HCT116 (cell line): ENCODE measurements at regions of chr19 and their contacts with region 1.

Region 1: GRCh38 chr19:13748169-13748828 is 16.0 kb upstream of the MRI1 start:
- DNase-seq: no peak
- ATAC-seq: no peak
- H3K4me3 ChIP-seq: peak overlapping the region; percentile 75 to 78
- H3K27ac ChIP-seq: peak overlapping the region; percentile 83
- H3K4me1 ChIP-seq: peaks cover 2 to 16% of the 10 kb centered on the region in 2 experiments; a peak in 3 of 4 replicates
- H3K27me3 ChIP-seq: no peaks in the 10 kb centered on the region
- CTCF ChIP-seq: no peak
- POLR2A ChIP-seq: no peak
- RAD21 ChIP-seq: no peak

Region 2: GRCh38 chr19:13707915-13708314 is 40.4 kb before region 1 on chr19:
- CTCF ChIA-PET with region 1: no interaction called
- POLR2A ChIA-PET with region 1: no interaction called
- RAD21 ChIA-PET with region 1: no interaction called
- intact Hi-C with region 1: no loop called
- DNase-seq: no peak
- ATAC-seq: no peak
- H3K4me3 ChIP-seq: no peak overlapping the region
- H3K27ac ChIP-seq: no peak overlapping the region
- H3K4me1 ChIP-seq: no peaks in the 10 kb centered on the region
- H3K27me3 ChIP-seq: no peaks in the 10 kb centered on the region
- CTCF ChIP-seq: no peak
- POLR2A ChIP-seq: no peak
- RAD21 ChIP-seq: no peak

Region 3: DNA sequence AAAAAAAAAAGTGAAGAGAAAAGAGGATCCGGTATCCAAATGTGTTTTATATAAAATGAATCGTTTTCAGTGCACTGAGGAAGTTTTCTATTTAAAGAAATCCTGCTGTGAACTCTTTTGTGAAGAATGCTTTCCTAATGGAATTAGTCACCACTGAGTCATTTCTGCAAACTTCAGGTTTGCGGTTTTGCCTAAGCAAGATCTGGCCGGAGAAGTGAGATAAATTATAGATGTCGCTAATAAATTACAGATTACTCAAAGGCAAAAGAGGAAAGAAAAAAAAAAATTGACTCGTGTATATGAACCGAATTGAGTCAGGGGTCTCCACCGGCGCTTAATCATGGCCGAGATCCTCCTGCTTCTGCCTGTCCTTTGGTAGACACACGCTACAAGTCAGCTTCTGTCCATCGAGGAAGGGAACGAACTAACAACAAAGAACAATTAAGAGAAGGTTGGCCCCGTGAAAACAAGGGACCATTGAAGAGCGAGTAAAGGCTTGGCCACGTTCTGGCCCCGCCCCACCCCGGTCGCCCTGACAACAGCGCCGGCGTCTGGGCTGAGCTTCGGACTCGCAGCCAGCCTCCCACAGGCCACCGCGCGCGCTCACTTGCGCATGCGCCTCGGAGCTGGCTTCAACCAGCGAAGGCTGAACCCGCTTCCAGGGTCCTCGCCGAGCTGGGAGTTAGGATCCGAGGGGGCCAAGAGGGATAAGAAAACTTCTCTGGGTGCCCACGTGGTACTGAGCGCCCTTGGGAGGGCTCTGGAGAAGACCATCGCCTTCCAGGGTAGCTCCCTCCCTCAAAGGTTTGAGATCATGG is 16.9 kb before region 1 on chr19:
- CTCF ChIA-PET with region 1: interaction called, 3 read pairs
- POLR2A ChIA-PET with region 1: interaction called, 23 read pairs
- RAD21 ChIA-PET with region 1: no interaction called
- intact Hi-C with region 1: no loop called
- DNase-seq: peak; percentile 94
- ATAC-seq: peak; percentile 98
- H3K4me3 ChIP-seq: peak overlapping the region; percentile 76 to 77
- H3K27ac ChIP-seq: peak overlapping the region; percentile 100
- H3K4me1 ChIP-seq: peaks cover 24 to 32% of the 10 kb centered on the region in 2 experiments
- H3K27me3 ChIP-seq: no peaks in the 10 kb centered on the region
- CTCF ChIP-seq: no peak
- POLR2A ChIP-seq: peak; percentile 69
- RAD21 ChIP-seq: no peak

Region 4: GRCh38 chr19:13952154-13953035 is 204.1 kb after region 1 on chr19 and contains the start of gene DCAF15:
- CTCF ChIA-PET with region 1: no interaction called
- POLR2A ChIA-PET with region 1: no interaction called
- RAD21 ChIA-PET with region 1: no interaction called
- intact Hi-C with region 1: no loop called
- DNase-seq: peak; percentile 99
- ATAC-seq: peak; percentile 98
- H3K4me3 ChIP-seq: peak within 1 kb of the TSS; percentile 91 to 92
- H3K27ac ChIP-seq: peak within 1 kb of the TSS; percentile 67
- H3K4me1 ChIP-seq: peaks cover 7 to 18% of the 10 kb centered on the region in 2 experiments
- H3K27me3 ChIP-seq: no peaks in the 10 kb centered on the region
- CTCF ChIP-seq: no peak
- POLR2A ChIP-seq: peak; percentile 24
- RAD21 ChIP-seq: no peak
- total RNA-seq, gene DCAF15: 46.2 TPM